ENCODE measurements at regions of chr5 and their contacts with region 1.

Region 1: DNA sequence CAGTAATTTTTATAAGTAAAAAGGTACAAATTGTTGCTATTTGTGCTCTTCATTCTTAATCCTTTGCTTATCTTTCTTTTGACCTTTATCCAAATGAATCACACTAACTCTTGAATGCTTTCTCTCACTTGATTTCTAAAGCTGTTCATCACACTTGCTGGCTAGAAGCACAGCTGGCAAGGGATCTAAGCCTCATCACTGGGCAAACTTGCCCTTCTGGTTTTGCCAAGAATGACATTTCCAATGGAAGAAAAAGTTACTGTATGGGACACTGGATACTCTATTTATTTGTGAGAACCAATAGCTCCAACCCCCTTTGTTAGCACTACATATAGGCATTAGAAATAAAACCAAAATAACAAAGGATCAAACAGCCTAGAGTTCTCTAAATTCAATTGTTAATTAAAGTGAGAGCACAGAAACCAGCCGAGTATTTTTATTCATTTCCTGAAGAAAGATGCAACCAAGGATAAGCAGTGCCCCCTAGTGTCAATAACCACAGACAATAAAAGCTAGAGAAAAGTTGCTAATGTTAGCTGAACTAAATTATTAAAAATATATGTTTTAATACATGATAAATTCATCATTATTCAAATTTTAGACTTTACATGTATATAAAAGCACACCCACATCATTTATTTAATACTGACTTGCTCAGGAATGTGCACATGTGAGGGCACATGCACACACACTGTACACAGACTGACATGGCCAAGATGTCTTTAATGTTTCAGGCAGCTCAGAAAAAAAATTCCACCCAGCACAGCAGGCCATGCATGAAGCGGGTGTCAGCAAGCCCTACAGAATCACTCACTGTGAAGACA is 59.8 kb upstream of the POU5F2 start:
- DNase-seq: no peak
- H3K4me3 ChIP-seq: no peak overlapping the region
- H3K27ac ChIP-seq: no peak overlapping the region
- H3K4me1 ChIP-seq: peaks cover 0 to 5% of the 10 kb centered on the region in 2 donors
- H3K27me3 ChIP-seq: no peaks in the 10 kb centered on the region
- CTCF ChIP-seq: peak in 2 of 3 donors; percentile 36 to 50
- POLR2A ChIP-seq: no peak

Region 2: DNA sequence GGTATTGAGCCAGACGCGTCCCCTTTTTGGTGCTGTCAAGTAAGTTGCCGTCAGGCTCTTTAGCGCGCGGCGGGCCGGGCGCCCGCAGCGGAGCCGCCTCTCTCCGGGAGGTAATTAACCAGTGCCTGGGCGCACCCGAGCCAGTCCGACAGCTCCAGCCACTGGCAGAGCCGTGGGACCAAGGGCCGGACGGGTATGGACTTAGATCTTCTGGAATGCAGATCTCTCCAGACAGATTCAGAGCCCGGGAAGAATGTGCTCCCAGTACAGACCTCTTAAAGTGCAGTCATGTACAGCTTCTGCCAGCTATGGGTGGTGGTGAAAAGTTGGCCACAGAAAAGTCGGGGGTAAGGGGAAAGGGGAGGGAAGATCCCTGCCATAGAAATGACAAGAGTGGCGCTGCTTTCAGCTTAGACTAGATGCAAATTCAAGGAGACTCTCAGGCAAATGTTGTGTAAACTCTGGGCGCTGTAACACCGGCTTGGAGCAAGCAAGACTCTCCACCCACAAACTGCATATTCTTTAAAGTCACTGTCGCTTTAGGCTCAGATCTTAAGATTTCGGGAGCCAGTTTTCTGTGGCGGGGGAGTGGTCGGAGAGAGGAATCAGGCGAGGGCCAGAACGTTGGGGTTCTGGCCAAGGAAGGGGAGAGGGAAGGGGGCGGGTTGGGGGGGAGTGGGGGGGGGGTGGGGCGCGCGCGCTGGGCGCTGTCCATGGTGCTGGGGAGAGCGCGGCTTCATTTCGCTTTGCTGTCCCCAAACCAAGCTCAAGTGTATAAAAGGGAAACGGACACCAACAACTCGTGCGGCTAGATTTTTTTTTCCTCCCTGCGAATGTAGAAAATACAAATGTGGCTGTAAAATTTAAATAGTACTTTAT is 189.0 kb before region 1 on chr5:
- intact Hi-C with region 1: loop called (anchors 5 kb)
- DNase-seq: no peak
- H3K4me3 ChIP-seq: peak overlapping the region in 2 of 3 donors; percentile 22 to 39
- H3K27ac ChIP-seq: no peak overlapping the region
- H3K4me1 ChIP-seq: no peaks in the 10 kb centered on the region
- H3K27me3 ChIP-seq: peaks cover 0 to 64% of the 10 kb centered on the region in 2 donors
- CTCF ChIP-seq: no peak
- POLR2A ChIP-seq: no peak

Measured in breast epithelium (tissue), 4 donors.